ENCODE measurements at regions of chr3 and their contacts with region 1.

Region 1: GRCh38 chr3:125165189-125165947 is 47.2 kb downstream of the SLC12A8 start:
- DNase-seq: peak; percentile 88

Region 2: DNA sequence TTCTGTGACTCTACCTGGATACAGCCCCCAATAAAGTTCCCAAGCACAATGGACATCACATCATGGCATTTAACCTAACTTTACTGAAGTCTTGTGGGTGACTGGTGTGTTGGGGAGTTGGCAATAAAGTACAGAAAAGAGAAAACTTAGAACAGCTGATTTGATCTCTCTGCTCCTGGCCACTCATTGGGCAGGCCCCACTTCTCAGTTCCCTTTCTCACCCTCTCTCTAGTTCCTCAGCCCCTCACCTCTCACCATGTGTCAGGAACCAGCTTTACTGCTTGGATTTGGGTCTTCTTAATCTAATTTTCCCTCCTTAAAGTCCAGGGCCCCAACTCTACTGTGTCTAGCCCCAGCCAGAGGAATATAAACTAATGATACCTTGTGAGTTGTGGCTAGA is 230.1 kb before region 1 on chr3:
- intact Hi-C with region 1: loop called in 1 of 2 experiments (anchors 10 kb)
- DNase-seq: no peak

Region 3: DNA sequence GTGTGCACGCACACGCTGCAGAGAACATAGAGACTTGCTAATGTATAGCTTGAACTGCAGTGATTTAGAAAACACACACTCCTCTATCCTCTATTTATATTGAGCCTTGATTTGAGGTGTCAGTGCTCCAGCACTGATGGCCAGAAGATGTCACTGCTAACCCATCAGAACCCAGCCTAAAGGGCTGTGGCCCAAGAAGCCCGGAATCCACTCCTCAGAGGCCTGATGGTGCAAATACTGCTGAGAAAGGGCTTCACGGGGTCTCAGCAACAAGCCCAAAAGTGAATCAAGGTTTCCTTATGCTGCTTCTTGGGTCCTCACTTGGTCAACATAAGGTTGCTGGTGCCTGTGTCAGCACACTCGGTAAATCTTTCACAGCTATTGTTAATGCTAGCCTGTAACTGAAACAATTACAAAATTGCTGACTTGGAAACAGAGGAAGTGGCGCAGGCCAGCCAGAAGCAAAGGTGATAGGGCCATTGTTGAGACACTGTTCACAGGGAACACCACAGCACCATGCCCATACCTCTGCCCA is 169.8 kb before region 1 on chr3:
- intact Hi-C with region 1: loop called in 1 of 2 experiments (anchors 10 kb)
- DNase-seq: no peak

Region 4: DNA sequence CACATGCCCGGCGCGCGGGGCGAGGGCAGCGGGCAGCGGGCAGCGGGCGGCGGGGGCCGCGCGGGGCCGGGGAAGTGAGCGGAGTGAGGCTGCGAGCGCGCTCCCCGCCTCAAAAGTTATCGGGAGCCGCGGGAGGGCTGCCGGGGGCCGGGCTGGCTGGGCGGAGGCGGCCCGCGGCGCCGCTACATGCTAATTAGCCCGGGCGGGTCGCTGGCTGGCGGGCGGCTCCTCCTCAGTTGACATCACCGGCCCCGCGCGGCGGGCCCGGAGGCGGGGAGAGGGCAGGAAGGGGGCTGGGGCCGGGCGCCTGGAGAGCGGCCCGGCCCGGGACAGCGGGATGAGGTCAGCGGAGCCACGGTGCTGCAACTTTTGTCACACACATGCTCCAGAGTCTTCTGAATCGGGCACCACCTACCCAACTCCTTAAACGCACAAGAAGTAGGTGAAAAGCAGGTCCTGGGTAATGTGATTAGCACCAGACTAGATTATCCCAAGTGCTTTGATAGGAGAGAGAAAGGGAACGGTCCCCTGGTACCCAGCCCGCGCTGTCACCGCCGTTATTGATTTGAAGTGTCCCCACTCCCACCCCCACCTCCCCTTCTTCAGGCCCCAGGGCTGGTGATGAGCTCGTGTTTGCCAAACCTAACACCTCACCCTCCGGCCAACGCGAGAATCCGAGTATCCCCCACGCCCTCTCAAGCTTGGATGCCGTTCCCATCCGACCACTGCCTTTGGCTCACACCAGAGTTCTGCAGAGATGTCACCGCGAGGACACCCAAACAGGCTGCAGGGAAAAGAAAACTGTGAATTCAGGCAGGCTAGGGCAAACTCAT is 109.2 kb before region 1 on chr3 and contains the start of gene HEG1:
- intact Hi-C with region 1: loop called in 1 of 2 experiments (anchors 10 kb)
- DNase-seq: peak; percentile 97
- total RNA-seq, gene HEG1: 101 to 123 TPM

Measured in posterior vena cava (tissue), 2 donors.